OCI-LY7 (cell line): ENCODE measurements at regions of chr2 and their contacts with region 1.

Region 1: GRCh38 chr2:64914735-64915509 is 74.3 kb upstream of the SLC1A4 start:
- DNase-seq: peak; percentile 96
- H3K4me3 ChIP-seq: peak overlapping the region; percentile 52
- H3K27ac ChIP-seq: peak overlapping the region; percentile 97
- H3K4me1 ChIP-seq: peaks cover 66% of the 10 kb centered on the region
- CTCF ChIP-seq: no peak

Region 2: GRCh38 chr2:64212801-64213321 is 702.1 kb before region 1 on chr2:
- CTCF ChIA-PET with region 1: no interaction called
- POLR2A ChIA-PET with region 1: no interaction called
- intact Hi-C with region 1: no loop called
- DNase-seq: peak; percentile 29
- H3K4me3 ChIP-seq: peak overlapping the region; percentile 59
- H3K27ac ChIP-seq: peak overlapping the region; percentile 96
- H3K4me1 ChIP-seq: peaks cover 58% of the 10 kb centered on the region
- CTCF ChIP-seq: no peak

Region 3: DNA sequence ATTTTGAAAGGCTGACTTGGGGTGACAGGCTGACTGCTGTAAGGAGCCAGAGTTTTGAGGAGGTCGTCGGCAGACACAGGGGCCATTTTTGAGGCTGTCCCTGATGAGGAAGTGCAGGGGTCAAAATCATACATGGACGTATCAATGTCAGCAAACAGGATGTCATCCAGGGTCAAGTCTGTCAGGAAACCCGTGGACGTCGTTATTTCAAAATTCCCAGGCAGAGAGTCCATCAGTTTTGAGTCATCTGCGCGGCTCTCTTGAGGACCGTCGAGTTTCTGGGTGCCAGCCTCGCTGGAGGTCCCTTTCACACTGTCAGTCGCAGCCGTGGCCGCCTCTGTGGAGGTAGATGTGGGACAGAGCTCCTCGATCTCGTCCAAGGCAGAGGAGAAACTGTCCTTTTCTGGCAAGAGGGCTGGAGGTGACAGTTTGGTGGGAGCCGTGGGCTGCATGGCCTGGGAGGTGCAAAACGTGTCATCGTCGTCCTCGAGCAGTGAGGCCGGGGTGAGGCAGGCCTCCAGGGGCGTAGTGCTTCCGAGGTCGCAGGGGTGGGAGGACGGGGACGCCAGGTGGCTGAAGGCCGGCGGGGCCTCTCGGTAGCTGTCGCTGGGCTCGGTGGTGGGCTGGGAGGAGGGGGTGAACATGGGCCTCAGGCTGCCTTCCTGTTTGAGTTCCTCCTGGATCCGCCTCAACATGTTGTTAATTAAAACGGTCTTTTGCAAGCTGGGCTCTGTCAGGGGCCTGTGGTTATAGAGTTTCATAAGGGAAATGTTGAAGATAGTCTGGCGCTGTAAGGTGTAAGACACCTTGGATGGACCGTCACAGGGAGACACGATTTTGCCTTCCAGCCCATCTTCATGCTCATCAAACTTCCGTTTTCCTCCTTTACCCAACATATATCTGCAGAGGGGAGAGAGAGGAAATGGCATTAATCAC is 278.7 kb before region 1 on chr2:
- CTCF ChIA-PET with region 1: no interaction called
- POLR2A ChIA-PET with region 1: no interaction called
- intact Hi-C with region 1: loop called (anchors 2 kb)
- DNase-seq: peak; percentile 75
- H3K4me3 ChIP-seq: peak overlapping the region; percentile 52
- H3K27ac ChIP-seq: peak overlapping the region; percentile 88
- H3K4me1 ChIP-seq: peaks cover 63% of the 10 kb centered on the region
- CTCF ChIP-seq: no peak

Region 4: DNA sequence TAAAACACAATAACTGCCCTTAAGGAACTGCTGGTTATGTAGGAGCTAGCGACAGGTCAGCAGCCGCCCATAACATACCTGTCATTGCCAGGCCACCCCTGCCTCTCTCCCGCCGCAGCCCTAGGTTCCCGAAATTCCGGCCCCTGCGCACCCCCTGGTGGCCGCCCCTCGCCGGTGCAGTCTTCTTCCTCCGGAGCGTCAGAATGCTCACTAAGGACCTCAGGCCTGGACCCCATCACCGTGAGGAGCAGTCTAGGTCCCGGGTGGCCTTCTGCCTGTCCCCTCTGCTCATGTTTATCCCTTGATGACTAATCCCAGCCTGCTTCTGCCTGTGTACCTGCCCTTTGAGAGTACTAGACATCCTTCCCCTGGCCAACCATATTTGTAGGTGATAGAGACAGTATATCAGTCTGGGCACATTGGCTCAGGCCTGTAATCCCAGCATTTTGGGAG is 41.4 kb before region 1 on chr2:
- CTCF ChIA-PET with region 1: no interaction called
- POLR2A ChIA-PET with region 1: interaction called, 5 read pairs
- intact Hi-C with region 1: loop called (anchors 2 kb)
- DNase-seq: peak; percentile 75
- H3K4me3 ChIP-seq: peak overlapping the region; percentile 28
- H3K27ac ChIP-seq: no peak overlapping the region
- H3K4me1 ChIP-seq: peaks cover 9% of the 10 kb centered on the region
- CTCF ChIP-seq: peak; percentile 98

Region 5: DNA sequence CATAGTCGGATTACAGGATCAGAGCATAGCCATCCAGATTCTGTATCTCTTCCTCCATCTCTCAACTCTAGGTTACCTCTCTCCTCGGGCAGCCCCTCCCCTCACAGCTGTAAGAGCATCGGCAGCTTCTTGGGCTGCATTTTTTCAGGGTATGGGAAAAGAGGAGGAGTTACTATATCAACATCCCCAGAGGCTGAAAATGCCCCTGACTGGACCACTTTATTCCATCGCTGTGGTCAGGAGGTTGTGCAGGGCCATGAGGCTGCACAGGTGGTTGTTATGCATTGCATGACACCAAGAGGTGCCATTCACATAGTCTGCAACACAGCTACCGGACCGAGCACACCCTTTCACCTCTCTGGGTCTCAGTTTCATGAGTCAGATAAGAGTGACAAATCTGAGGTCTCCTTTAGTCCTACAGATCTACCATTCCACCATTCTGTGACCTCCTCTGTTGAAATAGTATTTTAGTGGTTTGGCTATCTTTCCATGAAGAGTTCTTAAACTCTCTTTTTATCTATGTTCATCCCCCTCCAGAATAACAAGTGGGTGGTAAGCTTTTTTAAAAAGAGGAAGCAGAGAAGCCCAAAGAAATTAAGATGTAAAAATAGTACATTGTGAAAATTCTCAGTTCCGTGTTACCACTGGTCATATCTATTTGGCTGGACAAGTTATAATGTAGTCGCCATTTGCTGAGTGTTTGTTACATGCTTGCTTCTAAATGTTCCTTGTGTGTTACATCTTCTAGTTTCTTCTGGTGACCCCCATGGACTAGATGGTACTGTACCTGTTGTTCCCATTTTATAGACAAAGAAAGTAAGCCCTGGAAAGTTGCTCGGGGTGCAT is 17.7 kb after region 1 on chr2:
- CTCF ChIA-PET with region 1: no interaction called
- POLR2A ChIA-PET with region 1: interaction called, 26 read pairs
- intact Hi-C with region 1: loop called (anchors 1 kb)
- DNase-seq: peak; percentile 81
- H3K4me3 ChIP-seq: peak overlapping the region; percentile 77
- H3K27ac ChIP-seq: peak overlapping the region; percentile 88
- H3K4me1 ChIP-seq: peaks cover 71% of the 10 kb centered on the region
- CTCF ChIP-seq: no peak; the same call in 1 of the 2 replicates

Region 6: DNA sequence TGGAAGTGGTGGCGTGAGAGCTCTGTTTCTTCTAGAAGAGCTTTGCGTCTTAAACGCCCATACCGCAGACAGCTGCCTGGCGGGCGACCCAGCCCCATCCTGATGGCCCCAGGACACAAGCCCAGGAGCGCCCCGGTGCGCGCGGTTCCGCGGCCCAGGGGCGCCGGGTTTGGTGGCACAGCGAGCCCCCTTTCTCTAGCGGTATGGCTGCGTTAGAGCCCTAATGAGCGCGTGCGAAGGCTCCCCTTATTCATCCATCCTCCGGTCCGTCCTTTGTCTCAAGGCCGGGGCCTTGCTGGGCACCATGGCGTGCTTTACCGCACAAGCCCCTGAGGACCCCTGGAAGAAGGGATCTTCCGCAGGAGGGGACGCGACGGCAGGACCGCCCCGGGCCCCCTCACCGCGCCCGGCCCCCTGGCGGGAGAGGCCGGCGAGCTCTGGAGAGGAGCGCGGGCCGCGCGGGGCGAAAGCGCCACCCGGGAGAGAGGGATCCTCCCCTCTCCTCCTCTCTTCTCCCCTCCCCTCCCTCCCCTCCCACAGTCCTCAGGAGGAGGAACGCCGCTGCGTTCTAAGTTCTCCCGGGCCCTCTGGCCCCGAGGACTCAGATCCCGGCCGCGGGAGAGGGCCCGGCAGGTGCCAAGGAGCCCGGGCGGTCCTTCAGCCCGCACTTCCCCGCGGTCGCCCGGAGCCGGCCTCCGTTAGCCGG is 73.7 kb after region 1 on chr2:
- CTCF ChIA-PET with region 1: interaction called, 3 read pairs
- POLR2A ChIA-PET with region 1: interaction called, 16 read pairs
- intact Hi-C with region 1: loop called (anchors 1 kb)
- DNase-seq: peak; percentile 66
- H3K4me3 ChIP-seq: peak overlapping the region; percentile 82
- H3K27ac ChIP-seq: peak overlapping the region; percentile 25
- H3K4me1 ChIP-seq: peaks cover 47% of the 10 kb centered on the region
- CTCF ChIP-seq: peak; percentile 62

Region 7: DNA sequence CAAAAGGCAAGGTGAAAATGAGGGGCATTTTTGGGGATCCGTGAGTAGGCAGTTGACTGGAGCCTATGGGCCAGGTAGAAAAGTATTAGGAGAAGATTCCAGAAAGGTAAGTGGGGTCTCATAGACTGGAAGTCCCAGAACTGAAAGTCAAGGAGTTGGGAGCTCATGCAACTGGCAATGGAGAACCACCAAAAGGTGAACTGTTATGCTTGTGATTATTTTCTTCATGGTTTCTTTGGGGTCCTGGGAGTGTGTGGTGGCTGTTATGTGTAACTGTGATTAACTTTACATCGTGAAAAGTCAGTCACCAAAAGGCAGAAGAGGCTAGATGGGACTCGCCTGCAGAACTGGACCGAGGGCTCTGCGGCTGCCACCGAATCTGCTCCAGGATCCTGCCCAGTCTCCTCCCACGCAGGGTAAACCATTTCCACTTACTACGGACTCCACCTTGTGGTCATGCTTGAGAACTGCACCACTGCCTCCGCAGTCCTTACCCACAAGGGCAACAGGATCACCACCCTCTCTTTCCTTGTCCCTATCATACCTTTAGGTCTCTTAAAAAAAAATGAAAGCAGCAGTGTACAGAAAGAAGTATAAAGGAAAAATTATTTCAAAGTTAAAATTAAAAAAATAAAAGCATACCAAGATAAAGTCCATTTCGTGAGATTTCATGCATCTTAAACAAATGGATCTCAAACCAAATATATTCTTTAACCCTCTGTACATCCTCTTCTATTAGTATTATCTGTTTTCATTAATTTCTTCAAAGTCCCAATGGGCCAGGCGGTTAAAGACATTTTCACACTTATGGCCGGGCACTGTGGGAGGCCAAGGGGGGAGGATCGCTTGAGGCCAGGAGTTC is 125.7 kb after region 1 on chr2:
- CTCF ChIA-PET with region 1: no interaction called
- POLR2A ChIA-PET with region 1: interaction called, 4 read pairs
- intact Hi-C with region 1: loop called (anchors 2 kb)
- DNase-seq: peak; percentile 85
- H3K4me3 ChIP-seq: no peak overlapping the region
- H3K27ac ChIP-seq: no peak overlapping the region
- H3K4me1 ChIP-seq: peaks cover 9% of the 10 kb centered on the region
- CTCF ChIP-seq: peak; percentile 98